K562 (cell line): ENCODE measurements at regions of chr5 and their contacts with region 1.

Region 1: DNA sequence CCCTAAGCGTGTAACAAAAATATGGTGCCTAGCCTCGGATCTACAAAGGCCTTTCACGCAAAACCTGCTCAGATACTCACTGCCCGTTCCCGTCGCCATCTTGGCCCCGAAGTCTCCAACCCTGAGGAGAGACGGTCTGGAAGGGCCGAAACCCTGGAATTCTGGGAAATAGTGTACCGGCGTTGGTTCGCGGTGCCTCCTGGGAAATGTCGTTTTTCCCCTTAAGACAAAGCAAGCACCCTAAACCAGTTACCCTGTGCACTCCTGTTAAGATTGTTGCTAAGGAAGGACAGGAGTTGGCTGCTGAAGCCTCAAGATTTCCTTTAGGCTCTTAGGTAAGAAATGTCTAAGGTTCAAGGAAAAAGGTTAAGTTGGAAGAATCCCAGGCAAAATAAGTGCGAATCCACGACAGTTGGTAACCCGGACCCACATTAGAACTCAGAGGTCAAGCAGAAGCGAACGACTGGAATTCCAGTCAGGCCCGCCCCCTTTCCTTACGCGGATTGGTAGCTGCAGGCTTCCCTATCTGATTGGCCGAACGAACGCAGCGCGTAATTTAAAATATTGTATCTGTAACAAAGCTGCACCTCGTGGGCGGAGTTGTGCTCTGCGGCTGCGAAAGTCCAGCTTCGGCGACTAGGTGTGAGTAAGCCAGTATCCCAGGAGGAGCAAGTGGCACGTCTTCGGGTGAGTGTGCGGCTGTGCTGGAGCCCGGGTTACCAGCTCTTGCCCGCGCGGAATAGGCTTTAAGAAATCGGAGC is at the starts of genes BRD8 and KIF20A:
- DNase-seq: peak; percentile 86 to 98 (median 91)
- ATAC-seq: peak; percentile 90
- H3K4me3 ChIP-seq: peak within 1 kb of the TSS; percentile 63
- H3K27ac ChIP-seq: peak within 1 kb of the TSS; percentile 99
- H3K4me1 ChIP-seq: peaks cover 0 to 5% of the 10 kb centered on the region in 2 experiments; a peak in 1 of 5 replicates
- H3K27me3 ChIP-seq: no peaks in the 10 kb centered on the region
- CTCF ChIP-seq: no peak; a peak in 1 of 6 replicates
- EP300 ChIP-seq: no peak
- POLR2A ChIP-seq: peak; percentile 94
- RAD21 ChIP-seq: no peak
- polyA plus RNA-seq, gene BRD8: 89.5 to 141 TPM
- polyA plus RNA-seq, gene KIF20A: 39.8 to 58.7 TPM

Region 2: DNA sequence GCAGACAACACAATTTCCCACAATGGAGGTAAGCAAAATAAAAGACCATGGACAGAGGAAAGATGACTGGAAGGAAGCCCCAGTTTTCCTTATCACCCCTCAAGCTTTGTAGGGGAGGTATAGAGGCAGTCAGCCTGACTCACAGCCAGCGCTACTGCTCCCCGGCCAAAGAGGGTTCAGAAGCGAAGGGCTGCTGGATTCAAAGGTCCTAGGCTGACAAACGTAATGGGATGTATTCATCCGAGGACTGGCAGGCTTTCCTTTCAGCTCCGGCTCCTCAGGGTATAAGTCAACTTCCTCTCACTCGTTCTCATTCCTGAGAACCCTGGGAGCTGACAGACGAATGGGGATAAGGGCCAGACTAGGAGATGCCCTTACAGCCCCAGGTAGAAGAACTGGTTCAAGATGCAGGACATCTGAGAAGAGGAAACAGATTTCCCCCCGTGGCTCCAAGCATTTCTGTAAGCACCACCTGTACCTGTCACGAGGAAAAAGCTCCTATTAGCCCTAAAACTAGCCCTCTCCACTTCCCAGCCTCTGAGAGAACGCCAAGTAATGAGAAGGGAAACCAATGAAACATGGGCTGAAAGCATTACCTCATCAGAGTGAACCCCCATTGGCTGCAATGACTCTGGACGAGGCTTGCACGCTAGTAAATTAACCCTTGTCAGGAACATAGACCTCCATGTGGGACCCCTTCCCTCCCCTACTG is 123.7 kb before region 1 on chr5:
- CTCF ChIA-PET with region 1: no interaction called
- POLR2A ChIA-PET with region 1: no interaction called
- in situ Hi-C with region 1: no loop called
- intact Hi-C with region 1: no loop called
- DNase-seq: peak in 3 of 4 experiments; percentile 24 to 45 (median 43)
- ATAC-seq: peak; percentile 88
- H3K4me3 ChIP-seq: no peak overlapping the region
- H3K27ac ChIP-seq: no peak overlapping the region; the same call in 2 of the 3 replicates
- H3K4me1 ChIP-seq: peaks cover 0 to 11% of the 10 kb centered on the region in 2 experiments; a peak in 3 of 5 replicates
- H3K27me3 ChIP-seq: no peaks in the 10 kb centered on the region
- CTCF ChIP-seq: no peak
- EP300 ChIP-seq: no peak
- POLR2A ChIP-seq: no peak
- RAD21 ChIP-seq: no peak

Region 3: GRCh38 chr5:138282920-138283742 is 104.4 kb after region 1 on chr5:
- CTCF ChIA-PET with region 1: interaction called, 10 read pairs
- POLR2A ChIA-PET with region 1: no interaction called
- in situ Hi-C with region 1: loop called (anchors 5 kb)
- intact Hi-C with region 1: loop called (anchors 1 kb)
- DNase-seq: peak; percentile 41 to 58 (median 48)
- ATAC-seq: peak; percentile 94
- H3K4me3 ChIP-seq: no peak overlapping the region
- H3K27ac ChIP-seq: no peak overlapping the region
- H3K4me1 ChIP-seq: no peaks in the 10 kb centered on the region
- H3K27me3 ChIP-seq: no peaks in the 10 kb centered on the region
- CTCF ChIP-seq: peak; percentile 57 to 82 (median 66)
- EP300 ChIP-seq: no peak
- POLR2A ChIP-seq: no peak
- RAD21 ChIP-seq: peak; percentile 58 to 74

Region 4: GRCh38 chr5:138408023-138408422 is 229.3 kb after region 1 on chr5:
- CTCF ChIA-PET with region 1: no interaction called
- POLR2A ChIA-PET with region 1: no interaction called
- in situ Hi-C with region 1: loop called (anchors 25 kb)
- intact Hi-C with region 1: loop called (anchors 2 kb)
- DNase-seq: peak in 1 of 4 experiments; percentile 5
- ATAC-seq: peak; percentile 43
- H3K4me3 ChIP-seq: no peak overlapping the region
- H3K27ac ChIP-seq: no peak overlapping the region
- H3K4me1 ChIP-seq: no peaks in the 10 kb centered on the region
- H3K27me3 ChIP-seq: no peaks in the 10 kb centered on the region
- CTCF ChIP-seq: no peak
- EP300 ChIP-seq: no peak
- POLR2A ChIP-seq: no peak
- RAD21 ChIP-seq: no peak

Region 5: GRCh38 chr5:138696503-138697191 is 518.0 kb after region 1 on chr5:
- CTCF ChIA-PET with region 1: no interaction called
- POLR2A ChIA-PET with region 1: no interaction called
- in situ Hi-C with region 1: no loop called
- intact Hi-C with region 1: no loop called
- DNase-seq: no peak
- ATAC-seq: no peak
- H3K4me3 ChIP-seq: no peak overlapping the region
- H3K27ac ChIP-seq: no peak overlapping the region
- H3K4me1 ChIP-seq: no peaks in the 10 kb centered on the region; a peak in 2 of 5 replicates
- H3K27me3 ChIP-seq: no peaks in the 10 kb centered on the region
- CTCF ChIP-seq: no peak
- EP300 ChIP-seq: no peak
- POLR2A ChIP-seq: no peak
- RAD21 ChIP-seq: no peak